ENCODE measurements at regions of chr15 and their contacts with region 1.

Region 1: GRCh38 chr15:29668120-29668602 is 154.1 kb downstream of the TJP1 start:
- DNase-seq: peak; percentile 91
- H3K4me3 ChIP-seq: no peak overlapping the region
- H3K27ac ChIP-seq: no peak overlapping the region
- H3K4me1 ChIP-seq: no peaks in the 10 kb centered on the region
- H3K27me3 ChIP-seq: no peaks in the 10 kb centered on the region
- CTCF ChIP-seq: peak; percentile 95

Region 2: GRCh38 chr15:29623116-29623639 is 45.0 kb before region 1 on chr15:
- CTCF ChIA-PET with region 1: no interaction called
- POLR2A ChIA-PET with region 1: no interaction called
- intact Hi-C with region 1: loop called (anchors 5 kb)
- DNase-seq: no peak
- H3K4me3 ChIP-seq: no peak overlapping the region
- H3K27ac ChIP-seq: no peak overlapping the region
- H3K4me1 ChIP-seq: no peaks in the 10 kb centered on the region
- H3K27me3 ChIP-seq: peaks cover 3% of the 10 kb centered on the region
- CTCF ChIP-seq: 0 out of 2 replicates have a peak, but pooled peaks have one; percentile 17

Region 3: GRCh38 chr15:29740692-29741311 is 72.6 kb after region 1 on chr15:
- CTCF ChIA-PET with region 1: no interaction called
- POLR2A ChIA-PET with region 1: no interaction called
- intact Hi-C with region 1: loop called (anchors 2 kb)
- DNase-seq: peak; percentile 9
- H3K4me3 ChIP-seq: no peak overlapping the region
- H3K27ac ChIP-seq: no peak overlapping the region
- H3K4me1 ChIP-seq: no peaks in the 10 kb centered on the region
- H3K27me3 ChIP-seq: no peaks in the 10 kb centered on the region
- CTCF ChIP-seq: peak; percentile 56

Region 4: GRCh38 chr15:29925227-29926082 is 257.3 kb after region 1 on chr15:
- CTCF ChIA-PET with region 1: interaction called, 4 read pairs
- POLR2A ChIA-PET with region 1: no interaction called
- intact Hi-C with region 1: loop called (anchors 1 kb)
- DNase-seq: peak; percentile 85
- H3K4me3 ChIP-seq: no peak overlapping the region
- H3K27ac ChIP-seq: no peak overlapping the region
- H3K4me1 ChIP-seq: no peaks in the 10 kb centered on the region
- H3K27me3 ChIP-seq: no peaks in the 10 kb centered on the region
- CTCF ChIP-seq: peak; percentile 93

Region 5: DNA sequence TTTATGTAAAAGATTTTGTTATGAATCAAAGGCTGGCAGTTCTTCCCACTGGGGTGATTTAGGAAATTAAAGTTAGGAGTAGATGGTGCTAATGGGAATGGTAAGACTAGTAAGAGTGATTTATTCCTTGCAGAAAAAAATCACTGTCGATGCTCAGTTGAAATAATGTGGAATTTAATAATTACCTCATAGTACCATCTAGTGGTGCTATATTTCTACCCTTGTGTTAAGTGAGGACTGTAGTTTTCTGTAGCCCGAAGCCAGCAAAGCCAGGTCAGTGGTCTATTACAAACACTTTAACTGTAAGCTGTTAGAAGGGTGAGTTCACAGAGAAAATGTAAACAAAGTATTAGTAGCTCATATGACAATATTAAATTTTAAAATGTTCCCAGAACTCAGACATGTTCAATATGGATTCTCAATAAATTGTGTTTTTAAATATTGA is 375.1 kb after region 1 on chr15:
- CTCF ChIA-PET with region 1: no interaction called
- POLR2A ChIA-PET with region 1: no interaction called
- intact Hi-C with region 1: loop called (anchors 1 kb)
- DNase-seq: no peak
- H3K4me3 ChIP-seq: no peak overlapping the region
- H3K27ac ChIP-seq: no peak overlapping the region
- H3K4me1 ChIP-seq: no peaks in the 10 kb centered on the region
- H3K27me3 ChIP-seq: no peaks in the 10 kb centered on the region
- CTCF ChIP-seq: 0 out of 2 replicates have a peak, but pooled peaks have one; percentile 22

Region 6: GRCh38 chr15:30073915-30074314 is 405.8 kb after region 1 on chr15:
- CTCF ChIA-PET with region 1: interaction called, 4 read pairs
- POLR2A ChIA-PET with region 1: no interaction called
- intact Hi-C with region 1: loop called (anchors 1 kb)
- DNase-seq: no peak
- H3K4me3 ChIP-seq: no peak overlapping the region
- H3K27ac ChIP-seq: no peak overlapping the region
- H3K4me1 ChIP-seq: no peaks in the 10 kb centered on the region
- H3K27me3 ChIP-seq: no peaks in the 10 kb centered on the region
- CTCF ChIP-seq: no peak

Measured in A673 (cell line).